ENCODE measurements at regions of chr5 and their contacts with region 1.

Region 1: DNA sequence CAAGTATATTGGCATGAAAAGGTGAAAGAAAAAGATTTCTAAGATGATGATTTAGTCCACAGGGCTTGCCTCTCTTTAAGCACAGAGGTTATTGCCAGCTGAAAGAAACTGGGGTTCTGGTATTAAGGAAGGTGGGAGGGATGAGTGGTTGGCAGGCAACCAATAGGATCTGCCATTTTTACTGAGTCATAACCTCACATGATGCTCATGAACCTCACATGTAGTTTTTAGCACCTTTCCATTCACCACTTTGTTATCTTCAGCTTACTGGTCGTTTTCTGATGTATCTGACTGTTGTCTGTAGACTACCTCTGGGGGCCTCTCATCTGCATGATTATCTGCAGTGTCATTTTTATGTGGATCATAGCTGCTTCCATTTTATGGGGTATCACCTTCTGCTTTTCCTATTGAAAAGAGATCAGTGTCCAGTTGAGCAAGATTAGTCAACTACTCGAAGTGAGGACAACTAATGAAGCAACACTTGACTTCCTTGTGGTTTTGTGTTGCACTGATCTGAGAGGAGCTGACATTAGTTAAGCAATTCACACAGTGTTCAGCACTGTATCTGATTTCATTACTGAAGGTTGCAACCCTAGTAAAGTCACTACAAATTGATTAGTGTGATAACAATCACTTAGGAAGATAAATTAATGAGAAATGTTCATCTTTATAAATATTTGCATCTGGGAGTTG is 186.3 kb downstream of the SGCD start:
- DNase-seq: no peak
- ATAC-seq: no peak
- H3K4me3 ChIP-seq: no peak overlapping the region
- H3K4me3 Mint-ChIP-seq: no peak overlapping the region
- H3K27ac ChIP-seq: no peak overlapping the region
- H3K27ac Mint-ChIP-seq: no peak overlapping the region
- H3K4me1 ChIP-seq: no peaks in the 10 kb centered on the region
- H3K4me1 Mint-ChIP-seq: no peaks in the 10 kb centered on the region
- H3K27me3 ChIP-seq: peaks cover 0 to 3% of the 10 kb centered on the region in 2 experiments
- H3K27me3 Mint-ChIP-seq: peaks cover 11% of the 10 kb centered on the region
- CTCF ChIP-seq: no peak

Region 2: GRCh38 chr5:155316070-155316714 is 1197.1 kb before region 1 on chr5:
- CTCF ChIA-PET with region 1: no interaction called
- POLR2A ChIA-PET with region 1: no interaction called
- intact Hi-C with region 1: no loop called
- DNase-seq: no peak
- ATAC-seq: no peak
- H3K4me3 ChIP-seq: no peak overlapping the region
- H3K4me3 Mint-ChIP-seq: no peak overlapping the region
- H3K27ac ChIP-seq: no peak overlapping the region
- H3K27ac Mint-ChIP-seq: no peak overlapping the region
- H3K4me1 ChIP-seq: no peaks in the 10 kb centered on the region
- H3K4me1 Mint-ChIP-seq: no peaks in the 10 kb centered on the region
- H3K27me3 ChIP-seq: no peaks in the 10 kb centered on the region
- H3K27me3 Mint-ChIP-seq: no peaks in the 10 kb centered on the region
- CTCF ChIP-seq: no peak

Region 3: DNA sequence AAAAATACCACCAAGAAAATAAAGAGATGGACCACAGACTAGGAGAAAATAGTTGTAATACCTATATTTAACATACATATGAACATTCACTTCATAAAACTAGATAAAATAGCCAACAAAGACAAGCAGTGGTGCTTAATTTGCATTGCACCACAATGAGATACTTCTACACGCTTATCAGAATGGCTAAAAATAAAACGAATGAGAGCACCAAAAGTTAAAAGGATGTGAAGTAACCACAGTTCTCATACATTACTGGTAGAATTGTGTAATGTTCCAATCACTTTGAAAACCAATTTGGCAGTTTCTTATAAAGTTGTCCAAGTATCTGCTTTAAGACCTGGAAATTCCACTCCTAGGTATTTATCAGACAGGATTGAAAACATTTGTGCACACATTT is 385.2 kb before region 1 on chr5:
- CTCF ChIA-PET with region 1: no interaction called
- POLR2A ChIA-PET with region 1: no interaction called
- intact Hi-C with region 1: no loop called
- DNase-seq: no peak
- ATAC-seq: no peak
- H3K4me3 ChIP-seq: no peak overlapping the region
- H3K4me3 Mint-ChIP-seq: no peak overlapping the region
- H3K27ac ChIP-seq: no peak overlapping the region
- H3K27ac Mint-ChIP-seq: no peak overlapping the region
- H3K4me1 ChIP-seq: no peaks in the 10 kb centered on the region
- H3K4me1 Mint-ChIP-seq: no peaks in the 10 kb centered on the region
- H3K27me3 ChIP-seq: no peaks in the 10 kb centered on the region
- H3K27me3 Mint-ChIP-seq: no peaks in the 10 kb centered on the region
- CTCF ChIP-seq: no peak

Region 4: DNA sequence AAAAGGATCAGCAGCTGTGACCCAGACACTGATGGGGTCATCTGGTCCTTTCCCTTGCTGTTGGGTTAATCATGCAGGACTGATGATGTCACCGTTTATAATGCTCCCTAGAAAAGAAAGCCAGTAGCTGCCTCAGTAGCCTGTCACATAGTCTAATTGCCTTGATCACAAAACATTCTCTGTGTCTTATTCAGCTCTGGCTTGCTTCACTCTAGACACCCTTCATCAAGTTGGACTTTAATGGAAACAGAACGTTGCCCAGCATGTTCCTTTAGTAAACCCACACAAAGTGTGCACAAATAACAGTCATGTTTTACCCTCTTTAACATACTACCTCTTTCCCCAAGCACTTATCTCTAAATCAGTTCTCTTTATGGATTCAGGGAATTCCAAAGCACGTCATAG is 15.5 kb before region 1 on chr5:
- CTCF ChIA-PET with region 1: no interaction called
- POLR2A ChIA-PET with region 1: no interaction called
- intact Hi-C with region 1: loop called in 1 of 2 experiments (anchors 2 kb)
- DNase-seq: no peak
- ATAC-seq: no peak
- H3K4me3 ChIP-seq: no peak overlapping the region
- H3K4me3 Mint-ChIP-seq: no peak overlapping the region
- H3K27ac ChIP-seq: no peak overlapping the region
- H3K27ac Mint-ChIP-seq: no peak overlapping the region
- H3K4me1 ChIP-seq: no peaks in the 10 kb centered on the region
- H3K4me1 Mint-ChIP-seq: no peaks in the 10 kb centered on the region
- H3K27me3 ChIP-seq: no peaks in the 10 kb centered on the region
- H3K27me3 Mint-ChIP-seq: peaks cover 2% of the 10 kb centered on the region
- CTCF ChIP-seq: no peak